Endothelial cell of umbilical vein (primary cell): ENCODE measurements at regions of chr20 and their contacts with region 1.

Region 1: DNA sequence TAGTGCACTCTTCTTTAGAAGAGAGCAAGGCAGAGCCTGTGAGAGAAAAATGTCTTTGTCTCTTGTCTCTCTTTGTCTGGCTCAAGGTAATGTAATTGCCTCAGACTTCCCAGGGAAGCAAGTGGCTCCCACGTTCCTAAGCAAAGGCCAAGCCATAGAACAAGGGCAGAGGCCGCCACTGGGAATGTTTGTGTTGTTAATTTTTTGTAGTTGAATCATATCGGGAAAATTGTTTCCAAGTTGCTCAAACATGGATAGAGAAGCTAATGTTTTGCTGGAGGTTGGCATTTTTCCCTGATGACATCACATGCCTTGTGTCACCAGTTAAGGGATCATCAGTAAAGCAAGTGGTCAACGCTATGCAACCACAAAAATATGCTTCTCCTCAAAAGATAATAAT is 211.5 kb upstream of the FOXA2 start:
- DNase-seq: peak; percentile 98
- H3K4me3 ChIP-seq: no peak overlapping the region
- H3K27ac ChIP-seq: peak overlapping the region; percentile 100
- H3K4me1 ChIP-seq: peaks cover 43% of the 10 kb centered on the region
- H3K27me3 ChIP-seq: no peaks in the 10 kb centered on the region
- CTCF ChIP-seq: no peak
- POLR2A ChIP-seq: peak; percentile 50

Region 2: DNA sequence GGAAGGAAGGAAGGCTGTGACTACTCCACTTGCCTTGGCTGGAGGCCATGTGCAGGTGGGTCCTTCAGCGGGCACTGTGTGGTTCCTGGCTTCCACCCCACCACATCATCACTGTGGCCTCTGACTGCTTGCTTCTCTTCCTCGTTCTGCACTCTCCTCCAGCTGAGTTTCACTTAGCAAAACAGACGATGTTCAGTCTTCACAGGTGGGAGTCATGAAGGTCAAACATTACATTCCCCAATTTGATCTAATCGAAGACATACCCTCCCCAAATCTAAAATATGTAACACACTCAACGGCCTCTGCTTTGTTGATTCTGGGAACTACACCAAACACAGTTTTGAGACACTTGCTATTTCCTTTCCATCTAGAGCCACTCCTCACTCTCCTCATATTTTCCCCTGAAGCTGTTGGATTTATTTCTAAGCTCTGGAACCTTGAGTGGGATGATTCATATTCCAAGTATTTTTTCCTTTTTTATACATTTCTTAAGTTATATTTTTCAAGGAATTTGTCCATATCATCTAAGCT is 79.0 kb before region 1 on chr20:
- CTCF ChIA-PET with region 1: interaction called, 3 read pairs
- POLR2A ChIA-PET with region 1: no interaction called
- dilution Hi-C with region 1: no loop called
- intact Hi-C with region 1: loop called (anchors 1 kb)
- DNase-seq: peak; percentile 68
- H3K4me3 ChIP-seq: no peak overlapping the region
- H3K27ac ChIP-seq: peak overlapping the region; percentile 59
- H3K4me1 ChIP-seq: peaks cover 39% of the 10 kb centered on the region
- H3K27me3 ChIP-seq: no peaks in the 10 kb centered on the region
- CTCF ChIP-seq: no peak
- POLR2A ChIP-seq: no peak

Region 3: GRCh38 chr20:22763257-22763906 is 32.5 kb before region 1 on chr20:
- CTCF ChIA-PET with region 1: interaction called, 3 read pairs
- POLR2A ChIA-PET with region 1: no interaction called
- dilution Hi-C with region 1: no loop called
- intact Hi-C with region 1: loop called (anchors 1 kb)
- DNase-seq: peak; percentile 51
- H3K4me3 ChIP-seq: no peak overlapping the region
- H3K27ac ChIP-seq: peak overlapping the region; percentile 34
- H3K4me1 ChIP-seq: peaks cover 11% of the 10 kb centered on the region
- H3K27me3 ChIP-seq: no peaks in the 10 kb centered on the region
- CTCF ChIP-seq: no peak
- POLR2A ChIP-seq: no peak

Region 4: DNA sequence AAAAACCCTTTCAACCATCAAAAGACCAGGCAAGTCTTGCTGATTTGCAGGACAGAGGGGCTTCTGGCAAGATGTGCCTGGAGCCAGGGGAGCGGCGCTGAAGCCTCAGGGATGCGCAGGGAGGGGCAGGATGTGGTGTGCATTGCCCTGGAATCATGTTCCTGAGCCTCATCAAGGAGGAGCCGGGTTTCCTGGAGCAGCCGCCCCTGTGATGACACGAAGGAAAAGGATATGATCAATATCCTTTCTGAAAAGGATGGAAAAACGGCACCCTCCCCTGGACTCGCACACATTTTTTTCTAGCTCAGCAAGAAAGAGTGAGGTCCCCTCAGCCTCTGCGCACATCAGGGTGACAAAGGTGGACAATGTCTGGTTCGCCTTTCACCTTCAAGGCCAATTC is 66.1 kb after region 1 on chr20:
- CTCF ChIA-PET with region 1: interaction called, 3 read pairs
- POLR2A ChIA-PET with region 1: no interaction called
- dilution Hi-C with region 1: no loop called
- intact Hi-C with region 1: loop called (anchors 1 kb)
- DNase-seq: peak; percentile 74
- H3K4me3 ChIP-seq: no peak overlapping the region
- H3K27ac ChIP-seq: peak overlapping the region; percentile 78
- H3K4me1 ChIP-seq: peaks cover 33% of the 10 kb centered on the region
- H3K27me3 ChIP-seq: no peaks in the 10 kb centered on the region
- CTCF ChIP-seq: no peak
- POLR2A ChIP-seq: peak; percentile 47

Region 5: GRCh38 chr20:22921595-22922421 is 125.9 kb after region 1 on chr20:
- CTCF ChIA-PET with region 1: no interaction called
- POLR2A ChIA-PET with region 1: no interaction called
- dilution Hi-C with region 1: no loop called
- intact Hi-C with region 1: loop called (anchors 5 kb)
- DNase-seq: peak; percentile 56
- H3K4me3 ChIP-seq: no peak overlapping the region
- H3K27ac ChIP-seq: peak overlapping the region; percentile 57
- H3K4me1 ChIP-seq: peaks cover 13% of the 10 kb centered on the region
- H3K27me3 ChIP-seq: no peaks in the 10 kb centered on the region
- CTCF ChIP-seq: no peak
- POLR2A ChIP-seq: no peak

Region 6: GRCh38 chr20:23147964-23148730 is 352.3 kb after region 1 on chr20:
- CTCF ChIA-PET with region 1: no interaction called
- POLR2A ChIA-PET with region 1: no interaction called
- dilution Hi-C with region 1: no loop called
- intact Hi-C with region 1: loop called (anchors 5 kb)
- DNase-seq: peak; percentile 84
- H3K4me3 ChIP-seq: no peak overlapping the region
- H3K27ac ChIP-seq: peak overlapping the region; percentile 88
- H3K4me1 ChIP-seq: peaks cover 85% of the 10 kb centered on the region
- H3K27me3 ChIP-seq: no peaks in the 10 kb centered on the region
- CTCF ChIP-seq: no peak
- POLR2A ChIP-seq: no peak

Region 7: GRCh38 chr20:23187751-23188150 is 391.9 kb after region 1 on chr20:
- CTCF ChIA-PET with region 1: no interaction called
- POLR2A ChIA-PET with region 1: no interaction called
- dilution Hi-C with region 1: no loop called
- intact Hi-C with region 1: loop called (anchors 10 kb)
- DNase-seq: no peak
- H3K4me3 ChIP-seq: no peak overlapping the region
- H3K27ac ChIP-seq: no peak overlapping the region
- H3K4me1 ChIP-seq: no peaks in the 10 kb centered on the region
- H3K27me3 ChIP-seq: no peaks in the 10 kb centered on the region
- CTCF ChIP-seq: no peak
- POLR2A ChIP-seq: no peak